ENCODE measurements at regions of chr3 and their contacts with region 1.

Region 1: DNA sequence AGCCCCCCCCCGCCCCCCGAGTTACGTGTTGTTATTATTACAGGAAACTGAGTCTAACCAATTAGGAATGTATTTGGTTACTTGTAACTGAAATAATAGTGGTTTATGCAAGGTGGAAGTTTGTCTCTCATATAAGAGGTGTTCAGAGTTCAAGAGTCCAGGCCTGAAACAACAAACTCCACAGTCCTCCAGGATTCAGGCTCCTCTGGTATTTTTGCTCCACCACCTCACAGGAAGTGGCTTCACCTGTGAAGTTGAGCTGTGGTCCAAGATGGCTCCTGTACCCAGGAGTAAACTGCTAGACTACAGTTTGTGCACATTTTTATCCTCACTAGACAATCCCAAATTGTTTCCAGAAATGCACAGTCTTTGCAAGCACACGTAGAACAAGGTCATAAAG is 27.3 kb downstream of the MOBP start:
- DNase-seq: no peak
- H3K4me3 ChIP-seq: no peak overlapping the region
- H3K27ac ChIP-seq: no peak overlapping the region
- H3K4me1 ChIP-seq: peaks cover 0 to 10% (median 4%) of the 10 kb centered on the region in 4 donors
- H3K27me3 ChIP-seq: no peaks in the 10 kb centered on the region
- CTCF ChIP-seq: no peak
- EP300 ChIP-seq: no peak
- POLR2A ChIP-seq: no peak

Region 2: DNA sequence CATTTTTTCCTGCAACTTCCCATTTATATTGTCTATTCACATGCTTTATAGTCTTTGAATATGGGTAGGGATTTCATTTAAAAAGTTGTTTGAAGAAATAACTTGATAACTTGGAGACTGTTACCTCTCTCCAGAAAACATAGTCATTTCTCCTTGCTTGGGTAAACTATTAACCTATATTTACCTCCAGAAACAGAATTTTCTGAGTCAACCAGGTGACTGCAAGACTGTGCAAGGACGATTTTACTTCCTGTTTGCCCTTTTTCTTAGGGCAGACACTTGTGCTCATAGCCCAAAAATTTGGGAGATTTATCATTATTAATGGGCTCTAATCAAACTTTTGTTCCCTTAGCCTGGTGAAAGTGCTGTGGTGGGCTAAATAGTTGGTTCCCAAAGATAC is 41.6 kb before region 1 on chr3:
- in situ Hi-C with region 1: loop called in 1 of 4 experiments (anchors 10 kb)
- intact Hi-C with region 1: loop called (anchors 5 kb)
- DNase-seq: no peak
- H3K4me3 ChIP-seq: no peak overlapping the region
- H3K27ac ChIP-seq: peak overlapping the region; percentile 29 to 66 (median 50)
- H3K4me1 ChIP-seq: peaks cover 0 to 32% (median 16%) of the 10 kb centered on the region in 4 donors
- H3K27me3 ChIP-seq: no peaks in the 10 kb centered on the region
- CTCF ChIP-seq: no peak
- EP300 ChIP-seq: no peak
- POLR2A ChIP-seq: no peak

Measured in transverse colon (tissue), 4 donors.